T-cell (primary cell): ENCODE measurements at regions of chrX and their contacts with region 1.

Region 1: GRCh38 chrX:132486591-132487178 is 2.2 kb downstream of the MBNL3 start:
- DNase-seq: no peak
- ATAC-seq: no peak
- H3K4me3 ChIP-seq: no peak overlapping the region
- H3K4me3 Mint-ChIP-seq: peak overlapping the region in 2 of 3 donors; percentile 59 to 86
- H3K27ac ChIP-seq: no peak overlapping the region
- H3K27ac Mint-ChIP-seq: peak overlapping the region; percentile 9 to 82
- H3K4me1 ChIP-seq: peaks cover 22 to 27% of the 10 kb centered on the region in 2 experiments
- H3K4me1 Mint-ChIP-seq: peaks cover 47 to 74% (median 70%) of the 10 kb centered on the region in 3 donors
- H3K27me3 ChIP-seq: no peaks in the 10 kb centered on the region
- H3K27me3 Mint-ChIP-seq: peaks cover 0 to 11% of the 10 kb centered on the region in 2 donors

Region 2: GRCh38 chrX:132022967-132023895 is 463.5 kb before region 1 on chrX and contains the start of gene STK26:
- CTCF ChIA-PET with region 1: no interaction called
- POLR2A ChIA-PET with region 1: interaction called in 1 of 2 experiments, 11 read pairs
- DNase-seq: peak; percentile 54 to 84 (median 73)
- ATAC-seq: peak; percentile 89 to 91 (median 90)
- H3K4me3 ChIP-seq: peak within 1 kb of the TSS; percentile 75 to 89
- H3K4me3 Mint-ChIP-seq: peak within 1 kb of the TSS; percentile 87 to 93 (median 89)
- H3K27ac ChIP-seq: peak within 1 kb of the TSS; percentile 68
- H3K27ac Mint-ChIP-seq: peak within 1 kb of the TSS; percentile 86 to 88
- H3K4me1 ChIP-seq: peaks cover 0 to 10% of the 10 kb centered on the region in 2 experiments
- H3K4me1 Mint-ChIP-seq: peaks cover 33 to 38% (median 36%) of the 10 kb centered on the region in 3 donors
- H3K27me3 ChIP-seq: no peaks in the 10 kb centered on the region
- H3K27me3 Mint-ChIP-seq: peaks cover 0 to 17% of the 10 kb centered on the region in 2 donors
- total RNA-seq, gene STK26: 28.5 to 38.1 (median 34.4) TPM

Region 3: GRCh38 chrX:132365490-132365889 is 121.2 kb before region 1 on chrX:
- CTCF ChIA-PET with region 1: no interaction called
- POLR2A ChIA-PET with region 1: no interaction called
- DNase-seq: no peak
- ATAC-seq: no peak
- H3K4me3 ChIP-seq: no peak overlapping the region
- H3K4me3 Mint-ChIP-seq: no peak overlapping the region
- H3K27ac ChIP-seq: no peak overlapping the region
- H3K27ac Mint-ChIP-seq: no peak overlapping the region
- H3K4me1 ChIP-seq: no peaks in the 10 kb centered on the region
- H3K4me1 Mint-ChIP-seq: peaks cover 0 to 2% (median 0%) of the 10 kb centered on the region in 3 donors
- H3K27me3 ChIP-seq: no peaks in the 10 kb centered on the region
- H3K27me3 Mint-ChIP-seq: peaks cover 0 to 4% of the 10 kb centered on the region in 2 donors